ENCODE measurements at regions of chr6 and their contacts with region 1.

Region 1: DNA sequence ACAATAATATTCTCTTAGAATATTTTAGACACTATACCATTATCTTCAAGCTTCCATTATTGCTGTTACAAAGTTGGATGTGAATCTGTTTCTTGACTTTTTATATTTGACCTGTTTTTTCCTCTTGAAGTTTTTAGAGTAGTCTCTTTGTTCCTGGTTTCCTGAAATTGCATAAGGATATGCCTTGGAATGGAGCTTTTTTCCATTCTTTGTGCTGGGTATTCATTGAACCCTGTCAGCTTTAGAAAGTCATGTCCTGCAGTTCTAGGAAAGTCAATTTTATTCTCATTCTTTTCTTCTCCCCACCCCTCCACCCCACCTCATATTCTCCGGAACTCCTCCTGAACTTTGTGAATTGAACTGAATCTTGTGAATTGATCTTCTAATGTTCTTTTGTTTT is 92.4 kb upstream of the FOXO3 start:
- DNase-seq: no peak
- ATAC-seq: no peak
- H3K4me3 ChIP-seq: no peak overlapping the region
- H3K4me3 Mint-ChIP-seq: no peak overlapping the region
- H3K27ac ChIP-seq: no peak overlapping the region
- H3K27ac Mint-ChIP-seq: no peak overlapping the region
- H3K4me1 ChIP-seq: no peaks in the 10 kb centered on the region
- H3K4me1 Mint-ChIP-seq: no peaks in the 10 kb centered on the region
- H3K27me3 ChIP-seq: no peaks in the 10 kb centered on the region
- H3K27me3 Mint-ChIP-seq: no peaks in the 10 kb centered on the region

Region 2: GRCh38 chr6:108903796-108904195 is 435.4 kb after region 1 on chr6:
- CTCF ChIA-PET with region 1: no interaction called
- POLR2A ChIA-PET with region 1: interaction called in 1 of 2 experiments, 11 read pairs
- DNase-seq: no peak
- ATAC-seq: no peak
- H3K4me3 ChIP-seq: no peak overlapping the region
- H3K4me3 Mint-ChIP-seq: no peak overlapping the region
- H3K27ac ChIP-seq: no peak overlapping the region
- H3K27ac Mint-ChIP-seq: peak overlapping the region; percentile 1 to 13
- H3K4me1 ChIP-seq: peaks cover 9 to 28% of the 10 kb centered on the region in 2 experiments
- H3K4me1 Mint-ChIP-seq: peaks cover 25 to 41% (median 28%) of the 10 kb centered on the region in 3 donors
- H3K27me3 ChIP-seq: no peaks in the 10 kb centered on the region
- H3K27me3 Mint-ChIP-seq: no peaks in the 10 kb centered on the region